ENCODE measurements at regions of chr1 and their contacts with region 1.

Region 1: GRCh38 chr1:8780405-8780804 is 37.0 kb downstream of the RERE start:
- DNase-seq: no peak
- ATAC-seq: no peak
- H3K4me3 Mint-ChIP-seq: no peak overlapping the region
- H3K27ac Mint-ChIP-seq: no peak overlapping the region
- H3K4me1 Mint-ChIP-seq: peaks cover 28% of the 10 kb centered on the region
- H3K27me3 Mint-ChIP-seq: no peaks in the 10 kb centered on the region
- CTCF ChIP-seq: no peak

Region 2: GRCh38 chr1:8817406-8818324 is 37.3 kb after region 1 on chr1 and contains the start of gene RERE:
- CTCF ChIA-PET with region 1: no interaction called
- POLR2A ChIA-PET with region 1: interaction called, 14 read pairs
- intact Hi-C with region 1: no loop called
- DNase-seq: peak; percentile 99
- ATAC-seq: peak; percentile 93
- H3K4me3 Mint-ChIP-seq: peak within 1 kb of the TSS; percentile 94
- H3K27ac Mint-ChIP-seq: peak within 1 kb of the TSS; percentile 96
- H3K4me1 Mint-ChIP-seq: peaks cover 42% of the 10 kb centered on the region
- H3K27me3 Mint-ChIP-seq: no peaks in the 10 kb centered on the region
- CTCF ChIP-seq: no peak
- total RNA-seq, gene RERE: 90.5 and 98.8 TPM in 2 replicates

Region 3: DNA sequence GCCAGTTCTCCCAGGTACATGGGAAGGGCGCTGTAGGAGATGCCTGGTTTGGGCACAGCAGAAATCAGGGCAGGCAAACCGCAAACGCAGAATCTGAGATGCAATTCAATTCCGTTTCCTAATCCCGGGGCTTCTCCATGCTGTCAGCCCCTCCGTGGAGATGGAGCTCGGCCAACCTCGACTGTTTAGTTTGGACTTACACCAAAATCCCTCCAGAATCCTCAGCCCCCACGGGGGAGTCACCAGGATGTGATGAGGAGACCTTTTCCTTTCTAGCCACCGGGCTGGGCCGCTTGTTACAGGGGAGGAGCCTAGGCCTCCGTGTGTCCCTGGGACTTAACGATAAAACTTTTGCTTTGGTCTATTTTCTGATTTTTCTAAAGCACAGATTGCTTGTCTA is 237.9 kb after region 1 on chr1:
- CTCF ChIA-PET with region 1: no interaction called
- POLR2A ChIA-PET with region 1: no interaction called
- intact Hi-C with region 1: no loop called
- DNase-seq: no peak
- ATAC-seq: no peak
- H3K4me3 Mint-ChIP-seq: no peak overlapping the region
- H3K27ac Mint-ChIP-seq: no peak overlapping the region
- H3K4me1 Mint-ChIP-seq: peaks cover 17% of the 10 kb centered on the region
- H3K27me3 Mint-ChIP-seq: peaks cover 3% of the 10 kb centered on the region
- CTCF ChIP-seq: no peak